ENCODE measurements at regions of chr2 and their contacts with region 1.

Region 1: GRCh38 chr2:65064728-65065552 is 8.7 kb downstream of the CEP68 start:
- DNase-seq: peak; percentile 88
- ATAC-seq: peak; percentile 88
- H3K4me3 ChIP-seq: peak overlapping the region in 1 of 5 experiments; percentile 19
- H3K4me3 Mint-ChIP-seq: peak overlapping the region; percentile 63
- H3K27ac ChIP-seq: peak overlapping the region; percentile 20 to 54
- H3K27ac Mint-ChIP-seq: peak overlapping the region; percentile 90
- H3K4me1 ChIP-seq: peaks cover 13 to 26% of the 10 kb centered on the region in 2 donors
- H3K4me1 Mint-ChIP-seq: peaks cover 34% of the 10 kb centered on the region
- H3K27me3 ChIP-seq: no peaks in the 10 kb centered on the region
- H3K27me3 Mint-ChIP-seq: no peaks in the 10 kb centered on the region
- CTCF ChIP-seq: peak; percentile 89

Region 2: GRCh38 chr2:64904413-64905329 is 160.3 kb before region 1 on chr2:
- CTCF ChIA-PET with region 1: no interaction called
- POLR2A ChIA-PET with region 1: no interaction called
- intact Hi-C with region 1: no loop called
- DNase-seq: peak; percentile 28
- ATAC-seq: peak; percentile 53
- H3K4me3 ChIP-seq: no peak overlapping the region
- H3K4me3 Mint-ChIP-seq: peak overlapping the region; percentile 26
- H3K27ac ChIP-seq: no peak overlapping the region
- H3K27ac Mint-ChIP-seq: peak overlapping the region; percentile 20
- H3K4me1 ChIP-seq: peaks cover 17% of the 10 kb centered on the region in 2 donors
- H3K4me1 Mint-ChIP-seq: peaks cover 21% of the 10 kb centered on the region
- H3K27me3 ChIP-seq: no peaks in the 10 kb centered on the region
- H3K27me3 Mint-ChIP-seq: no peaks in the 10 kb centered on the region
- CTCF ChIP-seq: no peak

Region 3: DNA sequence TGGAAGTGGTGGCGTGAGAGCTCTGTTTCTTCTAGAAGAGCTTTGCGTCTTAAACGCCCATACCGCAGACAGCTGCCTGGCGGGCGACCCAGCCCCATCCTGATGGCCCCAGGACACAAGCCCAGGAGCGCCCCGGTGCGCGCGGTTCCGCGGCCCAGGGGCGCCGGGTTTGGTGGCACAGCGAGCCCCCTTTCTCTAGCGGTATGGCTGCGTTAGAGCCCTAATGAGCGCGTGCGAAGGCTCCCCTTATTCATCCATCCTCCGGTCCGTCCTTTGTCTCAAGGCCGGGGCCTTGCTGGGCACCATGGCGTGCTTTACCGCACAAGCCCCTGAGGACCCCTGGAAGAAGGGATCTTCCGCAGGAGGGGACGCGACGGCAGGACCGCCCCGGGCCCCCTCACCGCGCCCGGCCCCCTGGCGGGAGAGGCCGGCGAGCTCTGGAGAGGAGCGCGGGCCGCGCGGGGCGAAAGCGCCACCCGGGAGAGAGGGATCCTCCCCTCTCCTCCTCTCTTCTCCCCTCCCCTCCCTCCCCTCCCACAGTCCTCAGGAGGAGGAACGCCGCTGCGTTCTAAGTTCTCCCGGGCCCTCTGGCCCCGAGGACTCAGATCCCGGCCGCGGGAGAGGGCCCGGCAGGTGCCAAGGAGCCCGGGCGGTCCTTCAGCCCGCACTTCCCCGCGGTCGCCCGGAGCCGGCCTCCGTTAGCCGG is 76.4 kb before region 1 on chr2:
- CTCF ChIA-PET with region 1: no interaction called
- POLR2A ChIA-PET with region 1: interaction called, 11 read pairs
- intact Hi-C with region 1: no loop called
- DNase-seq: peak; percentile 75
- ATAC-seq: peak; percentile 33
- H3K4me3 ChIP-seq: peak overlapping the region; percentile 53 to 87 (median 81)
- H3K4me3 Mint-ChIP-seq: peak overlapping the region; percentile 92
- H3K27ac ChIP-seq: peak overlapping the region in 1 of 2 donors; percentile 53
- H3K27ac Mint-ChIP-seq: peak overlapping the region; percentile 84
- H3K4me1 ChIP-seq: peaks cover 17 to 24% of the 10 kb centered on the region in 2 donors
- H3K4me1 Mint-ChIP-seq: peaks cover 37% of the 10 kb centered on the region
- H3K27me3 ChIP-seq: no peaks in the 10 kb centered on the region
- H3K27me3 Mint-ChIP-seq: no peaks in the 10 kb centered on the region
- CTCF ChIP-seq: peak; percentile 48

Region 4: GRCh38 chr2:65164426-65164891 is 99.5 kb after region 1 on chr2:
- CTCF ChIA-PET with region 1: interaction called, 96 read pairs
- POLR2A ChIA-PET with region 1: no interaction called
- intact Hi-C with region 1: loop called (anchors 1 kb)
- DNase-seq: no peak
- ATAC-seq: no peak
- H3K4me3 ChIP-seq: no peak overlapping the region
- H3K4me3 Mint-ChIP-seq: no peak overlapping the region
- H3K27ac ChIP-seq: no peak overlapping the region
- H3K27ac Mint-ChIP-seq: no peak overlapping the region
- H3K4me1 ChIP-seq: peaks cover 14 to 30% of the 10 kb centered on the region in 2 donors
- H3K4me1 Mint-ChIP-seq: peaks cover 34% of the 10 kb centered on the region
- H3K27me3 ChIP-seq: no peaks in the 10 kb centered on the region
- H3K27me3 Mint-ChIP-seq: no peaks in the 10 kb centered on the region
- CTCF ChIP-seq: no peak

Region 5: DNA sequence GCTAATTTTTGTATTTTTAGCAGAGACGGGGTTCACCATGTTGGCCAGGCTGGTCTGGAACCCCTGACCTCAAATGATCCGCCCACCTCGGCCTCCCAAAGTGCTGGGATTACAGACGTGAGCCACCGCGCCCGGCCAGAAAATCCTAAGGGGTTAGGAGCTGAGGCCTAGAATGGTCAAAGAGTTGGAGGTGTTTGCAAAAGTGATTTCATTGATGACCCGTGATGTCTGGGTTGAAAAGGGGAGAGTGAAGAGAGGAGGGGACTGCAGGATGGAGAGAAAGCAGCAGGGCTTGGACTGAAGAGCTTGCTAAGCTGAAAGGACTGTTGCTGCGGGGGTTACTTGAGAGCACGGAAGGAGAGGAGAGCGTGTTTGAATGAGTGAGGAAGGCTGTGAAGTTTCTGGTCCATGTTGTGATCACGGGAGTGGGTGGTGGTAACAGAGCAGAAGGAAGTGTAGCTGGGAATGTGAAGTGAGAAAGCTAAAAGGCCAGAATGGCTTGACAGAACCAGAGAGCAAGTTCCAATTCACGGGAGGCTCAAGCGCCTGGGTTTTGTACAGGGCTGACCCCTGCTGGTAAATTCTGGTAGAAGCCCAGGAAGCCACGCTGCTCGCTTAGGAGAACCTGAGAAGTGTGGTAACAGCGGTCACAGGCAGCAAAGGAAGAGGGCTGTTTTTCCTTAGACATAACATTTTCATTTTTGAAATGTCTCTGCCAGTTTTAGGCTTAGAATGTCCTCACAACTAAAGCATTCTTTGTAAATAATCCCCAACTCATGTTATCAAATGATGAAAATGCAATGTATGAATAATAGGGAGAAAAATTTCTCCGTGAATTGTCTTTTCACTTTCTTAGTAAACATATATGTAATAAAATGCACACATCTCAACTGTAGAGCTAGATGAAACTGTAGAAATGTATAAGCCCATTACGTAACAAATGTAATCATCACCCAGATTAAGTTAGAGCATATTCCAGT is 122.2 kb after region 1 on chr2:
- CTCF ChIA-PET with region 1: interaction called, 73 read pairs
- POLR2A ChIA-PET with region 1: interaction called, 3 read pairs
- intact Hi-C with region 1: loop called (anchors 1 kb)
- DNase-seq: peak; percentile 78
- ATAC-seq: peak; percentile 85
- H3K4me3 ChIP-seq: no peak overlapping the region
- H3K4me3 Mint-ChIP-seq: no peak overlapping the region
- H3K27ac ChIP-seq: no peak overlapping the region
- H3K27ac Mint-ChIP-seq: no peak overlapping the region
- H3K4me1 ChIP-seq: peaks cover 5 to 6% of the 10 kb centered on the region in 2 donors
- H3K4me1 Mint-ChIP-seq: peaks cover 6% of the 10 kb centered on the region
- H3K27me3 ChIP-seq: peaks cover 0 to 6% (median 0%) of the 10 kb centered on the region in 4 experiments
- H3K27me3 Mint-ChIP-seq: peaks cover 19% of the 10 kb centered on the region
- CTCF ChIP-seq: peak; percentile 83

Region 6: DNA sequence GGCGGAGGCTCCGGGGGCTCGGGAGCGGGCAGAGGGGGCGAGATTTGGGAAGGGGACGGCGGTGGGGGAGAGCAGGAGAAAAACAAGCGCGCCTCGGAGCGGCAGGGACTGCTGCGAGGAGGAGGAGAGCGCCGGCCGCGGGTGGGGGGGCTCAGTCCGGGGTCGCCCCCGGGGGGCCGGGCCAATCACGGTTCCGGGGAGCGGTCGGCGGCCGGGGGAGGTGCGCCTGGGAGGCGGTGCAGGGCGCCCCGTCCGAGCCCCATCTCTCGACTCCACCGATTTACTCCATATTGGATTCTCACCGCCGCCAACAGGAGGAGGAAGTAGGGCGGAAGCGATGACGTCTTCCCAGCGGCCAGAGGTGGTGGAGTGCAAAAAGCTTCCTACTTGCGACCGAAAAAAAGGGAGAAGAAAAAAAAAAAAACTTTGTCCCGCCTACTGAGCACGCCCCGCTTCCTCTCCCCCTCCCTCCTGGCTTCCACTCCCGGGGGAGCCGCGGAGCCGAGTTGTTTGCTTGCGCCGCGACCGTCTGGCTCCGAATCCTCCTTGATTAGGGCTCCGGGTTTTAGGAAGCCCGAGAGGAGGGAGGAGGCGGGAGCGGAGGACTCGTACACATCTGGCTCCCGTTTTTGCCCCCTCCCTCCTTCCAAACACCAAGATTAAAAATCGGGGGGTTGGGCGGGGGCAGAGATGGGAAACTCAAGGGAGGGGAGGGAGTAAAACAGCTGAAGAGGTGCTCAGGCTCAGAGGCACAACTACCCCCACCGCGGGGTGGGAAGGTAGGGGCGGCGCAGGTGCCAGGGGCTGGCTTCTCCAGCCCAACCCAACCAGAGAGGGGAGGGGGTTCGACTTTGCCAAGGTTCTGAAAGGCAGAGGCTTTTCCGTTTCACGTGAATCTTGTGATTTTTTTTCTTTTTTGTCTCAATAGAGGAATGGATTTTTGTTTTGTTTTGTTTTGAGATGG is 367.6 kb after region 1 on chr2 and contains the start of gene SPRED2:
- CTCF ChIA-PET with region 1: no interaction called
- POLR2A ChIA-PET with region 1: no interaction called
- intact Hi-C with region 1: no loop called
- DNase-seq: peak; percentile 83
- ATAC-seq: peak; percentile 31
- H3K4me3 ChIP-seq: peak within 1 kb of the TSS; percentile 62 to 96 (median 71)
- H3K4me3 Mint-ChIP-seq: peak within 1 kb of the TSS; percentile 91
- H3K27ac ChIP-seq: peak within 1 kb of the TSS in 1 of 2 donors; percentile 60
- H3K27ac Mint-ChIP-seq: peak within 1 kb of the TSS; percentile 84
- H3K4me1 ChIP-seq: peaks cover 16 to 38% of the 10 kb centered on the region in 2 donors
- H3K4me1 Mint-ChIP-seq: peaks cover 30% of the 10 kb centered on the region
- H3K27me3 ChIP-seq: peaks cover 0 to 47% (median 27%) of the 10 kb centered on the region in 4 experiments
- H3K27me3 Mint-ChIP-seq: peaks cover 33% of the 10 kb centered on the region
- CTCF ChIP-seq: no peak
- total RNA-seq, gene SPRED2: 0.53 and 1.3 TPM in 2 replicates

Region 7: DNA sequence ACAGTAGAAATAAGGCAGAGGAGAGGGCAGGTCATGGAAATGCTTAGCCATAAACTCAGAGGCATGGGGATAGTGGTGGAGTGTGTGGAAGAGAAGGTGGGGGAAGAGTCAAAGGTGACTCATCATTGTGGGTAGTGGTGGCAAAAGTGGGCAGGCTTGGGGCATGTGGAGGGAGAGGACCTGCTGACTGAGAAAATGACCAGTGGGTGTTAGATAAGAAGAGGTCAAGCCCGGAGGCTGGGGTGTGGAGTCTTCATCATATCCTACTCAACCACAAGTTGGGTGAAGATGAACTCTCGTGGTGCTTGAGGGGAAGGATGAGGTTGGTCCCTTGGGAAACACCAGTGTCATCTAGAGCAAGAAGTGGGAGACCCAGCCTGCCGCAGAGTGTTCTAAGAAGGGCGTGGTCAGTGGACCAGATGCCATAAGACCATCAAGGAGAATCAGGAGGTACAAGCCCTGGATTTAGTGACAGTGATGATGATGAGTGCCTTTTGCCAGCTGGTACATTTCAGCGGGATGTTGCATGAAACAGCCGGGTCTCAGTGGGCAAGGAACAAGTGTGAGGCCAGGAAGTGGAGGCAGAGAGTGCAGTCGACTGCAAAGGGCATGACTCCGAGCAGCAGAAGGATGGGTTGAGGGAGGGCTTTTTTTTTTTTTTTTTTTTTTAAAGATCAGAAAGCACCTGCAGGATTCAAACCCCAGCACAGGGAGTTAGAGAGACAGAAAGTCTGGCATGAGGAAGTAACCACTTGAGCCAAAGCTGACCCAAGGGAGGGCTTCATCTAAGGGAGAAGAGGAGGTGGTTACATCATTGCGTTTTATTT is 490.0 kb after region 1 on chr2:
- CTCF ChIA-PET with region 1: interaction called, 8 read pairs
- POLR2A ChIA-PET with region 1: interaction called, 4 read pairs
- intact Hi-C with region 1: loop called (anchors 2 kb)
- DNase-seq: peak; percentile 19
- ATAC-seq: peak; percentile 45
- H3K4me3 ChIP-seq: no peak overlapping the region
- H3K4me3 Mint-ChIP-seq: peak overlapping the region; percentile 26
- H3K27ac ChIP-seq: no peak overlapping the region
- H3K27ac Mint-ChIP-seq: peak overlapping the region; percentile 59
- H3K4me1 ChIP-seq: peaks cover 10 to 21% of the 10 kb centered on the region in 2 donors
- H3K4me1 Mint-ChIP-seq: peaks cover 22% of the 10 kb centered on the region
- H3K27me3 ChIP-seq: no peaks in the 10 kb centered on the region
- H3K27me3 Mint-ChIP-seq: peaks cover 7% of the 10 kb centered on the region
- CTCF ChIP-seq: no peak

Measured in B cell (primary cell).